ENCODE measurements at regions of chr17 and their contacts with region 1.

Region 1: GRCh38 chr17:60641810-60642220 is 35.8 kb upstream of the BCAS3 start:
- DNase-seq: no peak
- ATAC-seq: peak; percentile 78
- H3K4me3 ChIP-seq: no peak overlapping the region
- H3K27ac ChIP-seq: no peak overlapping the region
- H3K4me1 ChIP-seq: no peaks in the 10 kb centered on the region
- H3K27me3 ChIP-seq: no peaks in the 10 kb centered on the region
- CTCF ChIP-seq: peak; percentile 45 to 52 (median 49); a peak in 5 of 6 replicates
- EP300 ChIP-seq: no peak
- POLR2A ChIP-seq: no peak
- RAD21 ChIP-seq: peak; percentile 38; the same call in 1 of the 2 replicates

Region 2: DNA sequence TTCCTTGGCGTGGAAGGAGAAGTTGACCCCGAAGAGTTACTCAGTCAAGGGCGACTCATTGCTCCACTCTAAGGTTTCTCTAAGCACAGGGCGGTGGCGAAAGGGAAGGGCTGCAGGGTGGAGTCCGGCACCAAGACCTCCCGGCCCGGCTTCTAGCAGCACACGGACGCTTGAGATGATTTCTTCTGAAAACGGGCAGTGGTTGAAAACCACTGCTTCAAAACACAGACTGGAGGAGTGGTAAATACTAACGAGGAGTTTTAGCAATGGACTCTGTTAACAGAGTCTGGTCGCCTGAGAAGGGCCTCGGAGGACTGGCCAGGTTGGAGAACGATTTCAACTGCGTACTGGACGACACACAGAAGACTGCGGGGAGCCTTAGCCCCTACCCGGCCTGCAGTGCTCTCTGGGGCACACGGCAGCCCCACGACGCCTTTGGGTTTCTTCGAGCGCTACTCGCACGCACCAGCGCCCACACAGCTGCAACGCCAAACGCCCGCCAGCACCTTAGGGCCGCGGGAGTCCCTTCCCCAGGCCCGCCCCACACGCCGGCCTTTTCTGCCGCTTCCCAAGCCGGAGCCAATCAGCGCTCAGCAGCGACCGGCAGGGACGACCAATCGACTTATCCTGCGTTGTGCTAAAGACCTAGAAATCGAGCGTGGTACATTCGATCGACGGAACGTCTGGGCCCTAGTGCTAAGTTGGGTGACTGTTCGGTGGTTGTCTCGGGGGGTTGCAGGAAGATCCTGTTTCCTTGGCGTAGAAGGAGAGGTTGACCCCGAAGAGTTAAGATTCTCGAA is 506.5 kb before region 1 on chr17:
- CTCF ChIA-PET with region 1: no interaction called
- POLR2A ChIA-PET with region 1: interaction called, 4 read pairs
- RAD21 ChIA-PET with region 1: no interaction called
- SMC1A ChIA-PET with region 1: no interaction called
- in situ Hi-C with region 1: loop called (anchors 25 kb)
- intact Hi-C with region 1: loop called (anchors 10 kb)
- DNase-seq: peak; percentile 44
- ATAC-seq: peak; percentile 97
- H3K4me3 ChIP-seq: peak overlapping the region; percentile 64
- H3K27ac ChIP-seq: peak overlapping the region; percentile 4; the same call in 1 of the 2 replicates
- H3K4me1 ChIP-seq: no peaks in the 10 kb centered on the region
- H3K27me3 ChIP-seq: peaks cover 0 to 4% of the 10 kb centered on the region in 2 experiments; a peak in 2 of 4 replicates
- CTCF ChIP-seq: no peak
- EP300 ChIP-seq: no peak
- POLR2A ChIP-seq: peak; percentile 80
- RAD21 ChIP-seq: no peak

Region 3: GRCh38 chr17:60455378-60455777 is 186.4 kb before region 1 on chr17:
- CTCF ChIA-PET with region 1: interaction called, 10 read pairs
- POLR2A ChIA-PET with region 1: no interaction called
- RAD21 ChIA-PET with region 1: interaction called, 3 read pairs
- SMC1A ChIA-PET with region 1: interaction called, 3 read pairs
- in situ Hi-C with region 1: no loop called
- intact Hi-C with region 1: no loop called
- DNase-seq: no peak
- ATAC-seq: no peak
- H3K4me3 ChIP-seq: no peak overlapping the region
- H3K27ac ChIP-seq: no peak overlapping the region
- H3K4me1 ChIP-seq: no peaks in the 10 kb centered on the region
- H3K27me3 ChIP-seq: no peaks in the 10 kb centered on the region
- CTCF ChIP-seq: no peak
- EP300 ChIP-seq: no peak
- POLR2A ChIP-seq: no peak
- RAD21 ChIP-seq: no peak

Region 4: GRCh38 chr17:60577147-60577915 is 64.5 kb before region 1 on chr17:
- CTCF ChIA-PET with region 1: interaction called, 89 read pairs
- POLR2A ChIA-PET with region 1: no interaction called
- RAD21 ChIA-PET with region 1: interaction called, 11 read pairs
- SMC1A ChIA-PET with region 1: interaction called, 18 read pairs
- in situ Hi-C with region 1: no loop called
- intact Hi-C with region 1: loop called (anchors 2 kb)
- DNase-seq: peak; percentile 30
- ATAC-seq: peak; percentile 92
- H3K4me3 ChIP-seq: peak overlapping the region; percentile 57; the same call in 1 of the 2 replicates
- H3K27ac ChIP-seq: peak overlapping the region; percentile 42; the same call in 1 of the 2 replicates
- H3K4me1 ChIP-seq: no peaks in the 10 kb centered on the region; the same call in 1 of the 2 replicates
- H3K27me3 ChIP-seq: no peaks in the 10 kb centered on the region; a peak in 1 of 4 replicates
- CTCF ChIP-seq: peak in 1 of 3 experiments; percentile 38; a peak in 2 of 6 replicates
- EP300 ChIP-seq: no peak
- POLR2A ChIP-seq: no peak
- RAD21 ChIP-seq: peak; percentile 35; the same call in 1 of the 2 replicates

Region 5: GRCh38 chr17:60630352-60630751 is 11.5 kb before region 1 on chr17:
- CTCF ChIA-PET with region 1: interaction called, 13 read pairs
- POLR2A ChIA-PET with region 1: interaction called, 3 read pairs
- RAD21 ChIA-PET with region 1: interaction called, 3 read pairs
- SMC1A ChIA-PET with region 1: interaction called, 3 read pairs
- in situ Hi-C with region 1: no loop called
- intact Hi-C with region 1: no loop called
- DNase-seq: no peak
- ATAC-seq: no peak
- H3K4me3 ChIP-seq: no peak overlapping the region
- H3K27ac ChIP-seq: no peak overlapping the region
- H3K4me1 ChIP-seq: no peaks in the 10 kb centered on the region
- H3K27me3 ChIP-seq: no peaks in the 10 kb centered on the region
- CTCF ChIP-seq: no peak
- EP300 ChIP-seq: no peak
- POLR2A ChIP-seq: no peak
- RAD21 ChIP-seq: no peak

Region 6: GRCh38 chr17:61037822-61038221 is 396.0 kb after region 1 on chr17:
- CTCF ChIA-PET with region 1: no interaction called
- POLR2A ChIA-PET with region 1: no interaction called
- RAD21 ChIA-PET with region 1: no interaction called
- SMC1A ChIA-PET with region 1: no interaction called
- in situ Hi-C with region 1: no loop called
- intact Hi-C with region 1: no loop called
- DNase-seq: no peak
- ATAC-seq: no peak
- H3K4me3 ChIP-seq: no peak overlapping the region
- H3K27ac ChIP-seq: no peak overlapping the region
- H3K4me1 ChIP-seq: no peaks in the 10 kb centered on the region
- H3K27me3 ChIP-seq: no peaks in the 10 kb centered on the region
- CTCF ChIP-seq: no peak
- EP300 ChIP-seq: no peak
- POLR2A ChIP-seq: no peak
- RAD21 ChIP-seq: no peak

Measured in GM12878 (cell line).